ENCODE measurements at regions of chr9 and their contacts with region 1.

Region 1: DNA sequence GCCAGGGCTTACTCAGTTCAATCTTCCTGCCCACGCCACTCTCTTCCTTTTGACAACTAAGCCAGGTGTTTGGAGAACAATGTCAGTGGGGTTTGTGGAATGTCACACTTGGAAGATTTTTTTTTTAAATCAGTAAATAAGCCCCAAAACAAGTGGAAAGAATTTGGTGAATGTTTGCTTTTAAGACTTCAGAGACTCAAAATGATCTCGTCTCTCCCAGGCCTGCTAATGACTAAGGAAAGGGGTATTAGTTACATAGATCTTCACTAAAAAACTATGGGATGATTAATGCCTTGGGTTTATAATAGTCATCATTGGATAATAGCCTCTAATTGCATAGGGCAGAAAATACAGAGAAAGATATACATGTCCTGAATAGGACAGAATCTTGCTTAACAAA is 166.4 kb downstream of the DMRT2 start:
- DNase-seq: no peak
- ATAC-seq: no peak
- H3K4me3 Mint-ChIP-seq: no peak overlapping the region
- H3K27ac Mint-ChIP-seq: no peak overlapping the region
- H3K4me1 Mint-ChIP-seq: no peaks in the 10 kb centered on the region
- H3K27me3 Mint-ChIP-seq: no peaks in the 10 kb centered on the region
- CTCF ChIP-seq: no peak

Region 2: DNA sequence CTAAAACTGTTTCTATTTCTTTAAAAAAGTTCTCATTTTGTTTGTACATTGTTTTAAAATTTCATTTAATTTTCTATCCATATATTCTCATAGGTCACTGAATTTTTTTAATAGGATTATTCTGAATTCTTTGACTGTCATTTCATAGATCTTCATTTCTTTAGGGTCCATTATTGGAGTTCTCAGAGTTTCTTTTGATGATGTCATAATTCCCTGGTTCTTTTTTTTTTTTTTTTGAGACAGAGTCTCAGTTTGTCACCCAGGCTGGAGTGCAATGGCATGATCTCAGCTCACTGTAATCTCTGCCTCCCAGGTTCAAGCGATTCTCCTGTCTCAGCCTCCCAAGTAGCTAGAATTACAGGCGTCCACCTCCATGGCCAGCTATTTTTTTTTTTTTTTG is 76.5 kb before region 1 on chr9:
- CTCF ChIA-PET with region 1: no interaction called
- POLR2A ChIA-PET with region 1: no interaction called
- intact Hi-C with region 1: no loop called
- DNase-seq: no peak
- ATAC-seq: no peak
- H3K4me3 Mint-ChIP-seq: no peak overlapping the region
- H3K27ac Mint-ChIP-seq: no peak overlapping the region
- H3K4me1 Mint-ChIP-seq: no peaks in the 10 kb centered on the region
- H3K27me3 Mint-ChIP-seq: peaks cover 5% of the 10 kb centered on the region
- CTCF ChIP-seq: no peak

Region 3: GRCh38 chr9:1173206-1173605 is 43.3 kb before region 1 on chr9:
- CTCF ChIA-PET with region 1: no interaction called
- POLR2A ChIA-PET with region 1: no interaction called
- intact Hi-C with region 1: no loop called
- DNase-seq: no peak
- ATAC-seq: no peak
- H3K4me3 Mint-ChIP-seq: no peak overlapping the region
- H3K27ac Mint-ChIP-seq: no peak overlapping the region
- H3K4me1 Mint-ChIP-seq: no peaks in the 10 kb centered on the region
- H3K27me3 Mint-ChIP-seq: no peaks in the 10 kb centered on the region
- CTCF ChIP-seq: no peak

Region 4: DNA sequence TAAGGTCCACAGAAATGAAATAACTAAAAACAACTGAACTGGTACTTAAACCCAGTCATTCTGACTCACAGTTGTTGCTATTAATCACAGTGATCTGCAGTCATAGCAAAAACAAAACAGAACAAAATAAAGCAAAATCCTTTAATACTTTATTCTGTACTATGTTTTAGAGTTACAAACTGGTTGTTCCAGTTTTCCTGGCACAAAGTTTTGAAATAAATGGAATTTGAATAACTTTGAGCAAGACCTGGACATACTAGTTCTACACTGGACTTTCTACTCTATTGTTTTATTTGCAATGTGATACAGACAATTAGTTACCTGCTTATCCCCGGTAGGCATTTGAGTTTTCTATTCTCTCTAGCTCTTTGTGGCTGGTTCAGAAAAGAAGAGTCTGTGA is 18.4 kb before region 1 on chr9:
- CTCF ChIA-PET with region 1: interaction called, 3 read pairs
- POLR2A ChIA-PET with region 1: no interaction called
- intact Hi-C with region 1: loop called (anchors 1 kb)
- DNase-seq: no peak
- ATAC-seq: no peak
- H3K4me3 Mint-ChIP-seq: no peak overlapping the region
- H3K27ac Mint-ChIP-seq: no peak overlapping the region
- H3K4me1 Mint-ChIP-seq: no peaks in the 10 kb centered on the region
- H3K27me3 Mint-ChIP-seq: no peaks in the 10 kb centered on the region
- CTCF ChIP-seq: no peak

Region 5: GRCh38 chr9:1427875-1428274 is 211.3 kb after region 1 on chr9:
- CTCF ChIA-PET with region 1: no interaction called
- POLR2A ChIA-PET with region 1: no interaction called
- intact Hi-C with region 1: no loop called
- DNase-seq: no peak
- ATAC-seq: no peak
- H3K4me3 Mint-ChIP-seq: no peak overlapping the region
- H3K27ac Mint-ChIP-seq: no peak overlapping the region
- H3K4me1 Mint-ChIP-seq: no peaks in the 10 kb centered on the region
- H3K27me3 Mint-ChIP-seq: no peaks in the 10 kb centered on the region
- CTCF ChIP-seq: no peak

Region 6: DNA sequence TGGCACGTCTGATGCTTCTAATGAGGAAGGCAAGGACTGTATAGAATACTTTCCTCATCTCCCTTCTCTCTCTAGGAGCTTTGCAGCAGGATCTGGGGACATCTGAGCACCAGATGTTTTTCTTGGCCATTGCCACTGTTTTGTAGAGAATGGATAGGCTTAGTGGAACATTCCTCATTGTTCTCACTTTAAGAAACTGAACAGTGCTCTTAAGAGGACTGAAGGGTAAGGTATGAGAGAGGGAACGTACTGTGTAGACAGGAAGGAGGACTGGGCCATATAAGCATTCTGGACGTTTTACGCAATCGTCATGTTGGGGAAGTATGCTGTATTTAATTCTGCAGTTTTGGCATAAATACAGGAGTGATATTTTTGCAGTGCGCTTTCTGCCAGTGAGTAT is 869.2 kb after region 1 on chr9:
- CTCF ChIA-PET with region 1: no interaction called
- POLR2A ChIA-PET with region 1: no interaction called
- intact Hi-C with region 1: no loop called
- DNase-seq: no peak
- ATAC-seq: no peak
- H3K4me3 Mint-ChIP-seq: no peak overlapping the region
- H3K27ac Mint-ChIP-seq: no peak overlapping the region
- H3K4me1 Mint-ChIP-seq: no peaks in the 10 kb centered on the region
- H3K27me3 Mint-ChIP-seq: no peaks in the 10 kb centered on the region
- CTCF ChIP-seq: no peak